ENCODE measurements at regions of chr18 and their contacts with region 1.

Region 1: GRCh38 chr18:13934676-13935075 is 19.3 kb upstream of the MC2R start:
- DNase-seq: no peak
- ATAC-seq: no peak
- H3K4me3 ChIP-seq: no peak overlapping the region
- H3K27ac ChIP-seq: no peak overlapping the region
- H3K4me1 ChIP-seq: no peaks in the 10 kb centered on the region
- H3K27me3 ChIP-seq: no peaks in the 10 kb centered on the region
- CTCF ChIP-seq: no peak
- POLR2A ChIP-seq: no peak
- RAD21 ChIP-seq: no peak

Region 2: GRCh38 chr18:13889666-13890065 is 45.0 kb before region 1 on chr18:
- CTCF ChIA-PET with region 1: no interaction called
- POLR2A ChIA-PET with region 1: no interaction called
- dilution Hi-C with region 1: no loop called
- in situ Hi-C with region 1: loop called (anchors 10 kb)
- intact Hi-C with region 1: no loop called
- DNase-seq: no peak
- ATAC-seq: no peak
- H3K4me3 ChIP-seq: no peak overlapping the region
- H3K27ac ChIP-seq: no peak overlapping the region
- H3K4me1 ChIP-seq: no peaks in the 10 kb centered on the region
- H3K27me3 ChIP-seq: no peaks in the 10 kb centered on the region
- CTCF ChIP-seq: no peak
- POLR2A ChIP-seq: no peak
- RAD21 ChIP-seq: no peak

Region 3: GRCh38 chr18:13945811-13946210 is 11.1 kb after region 1 on chr18:
- CTCF ChIA-PET with region 1: no interaction called
- POLR2A ChIA-PET with region 1: no interaction called
- dilution Hi-C with region 1: no loop called
- in situ Hi-C with region 1: no loop called
- intact Hi-C with region 1: no loop called
- DNase-seq: no peak
- ATAC-seq: no peak
- H3K4me3 ChIP-seq: no peak overlapping the region
- H3K27ac ChIP-seq: no peak overlapping the region
- H3K4me1 ChIP-seq: no peaks in the 10 kb centered on the region
- H3K27me3 ChIP-seq: no peaks in the 10 kb centered on the region
- CTCF ChIP-seq: no peak
- POLR2A ChIP-seq: no peak
- RAD21 ChIP-seq: no peak

Measured in IMR-90 (cell line).